Activated CD4-positive, alpha-beta T cell treated with anti-CD3 and anti-CD28 coated beads, Interleukin-2, amount 10 ng/mL, durations not matched to agents 7 days and 5 days (primary cell): ENCODE measurements at regions of chr11 and their contacts with region 1.

Region 1: DNA sequence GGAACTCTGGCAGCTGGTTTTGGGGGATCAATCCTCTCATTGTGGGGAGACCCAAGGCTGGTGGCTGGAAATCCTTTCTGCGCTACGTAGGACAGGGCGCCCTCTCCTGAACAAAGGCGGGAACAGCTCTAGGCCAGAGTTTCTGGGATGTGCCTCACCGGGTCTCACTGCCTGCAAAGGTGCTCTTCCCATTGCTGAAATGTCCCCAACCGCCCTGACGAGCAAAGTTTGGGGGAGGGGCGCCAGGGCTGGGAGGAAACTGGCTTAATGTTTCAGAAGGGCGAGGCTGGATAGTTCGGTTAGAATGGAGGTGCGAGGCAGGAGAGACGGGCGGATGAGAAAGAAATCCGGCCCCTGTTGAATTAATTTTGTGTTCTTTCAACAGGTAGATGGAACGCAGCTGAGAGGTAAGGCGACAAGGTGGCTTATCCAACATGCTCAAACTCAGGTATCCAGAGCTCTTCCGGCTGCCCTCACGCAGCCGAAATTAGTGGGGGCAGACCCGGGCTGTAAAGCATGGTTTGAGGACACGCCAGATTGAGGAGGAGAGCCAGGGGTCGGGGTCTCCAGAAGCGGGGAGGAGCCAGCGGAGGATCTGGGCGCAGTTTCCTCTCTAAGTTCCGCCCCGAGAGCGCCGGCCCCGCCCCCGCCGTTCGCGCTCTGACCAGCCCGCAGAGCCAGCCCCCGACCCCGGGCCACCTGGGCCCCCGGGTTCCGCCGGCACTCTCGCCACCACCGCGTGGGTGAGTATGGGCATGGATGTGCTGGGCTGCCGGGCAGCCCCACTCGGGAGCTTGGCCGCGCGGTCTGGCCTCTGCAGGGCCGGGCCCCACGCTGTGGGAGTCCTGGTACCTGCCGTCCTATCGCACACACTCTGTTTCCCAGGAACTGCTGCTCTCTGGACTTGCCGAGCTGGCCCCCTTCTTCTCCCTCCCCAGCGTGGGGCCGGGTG is at the start of gene PGAP2:
- DNase-seq: peak; percentile 67
- H3K4me3 Mint-ChIP-seq: peak within 1 kb of the TSS; percentile 86
- H3K27ac Mint-ChIP-seq: peak within 1 kb of the TSS; percentile 90
- H3K4me1 Mint-ChIP-seq: peaks cover 26% of the 10 kb centered on the region
- H3K27me3 Mint-ChIP-seq: no peaks in the 10 kb centered on the region
- total RNA-seq, gene PGAP2: 30.0 to 30.9 TPM

Region 2: DNA sequence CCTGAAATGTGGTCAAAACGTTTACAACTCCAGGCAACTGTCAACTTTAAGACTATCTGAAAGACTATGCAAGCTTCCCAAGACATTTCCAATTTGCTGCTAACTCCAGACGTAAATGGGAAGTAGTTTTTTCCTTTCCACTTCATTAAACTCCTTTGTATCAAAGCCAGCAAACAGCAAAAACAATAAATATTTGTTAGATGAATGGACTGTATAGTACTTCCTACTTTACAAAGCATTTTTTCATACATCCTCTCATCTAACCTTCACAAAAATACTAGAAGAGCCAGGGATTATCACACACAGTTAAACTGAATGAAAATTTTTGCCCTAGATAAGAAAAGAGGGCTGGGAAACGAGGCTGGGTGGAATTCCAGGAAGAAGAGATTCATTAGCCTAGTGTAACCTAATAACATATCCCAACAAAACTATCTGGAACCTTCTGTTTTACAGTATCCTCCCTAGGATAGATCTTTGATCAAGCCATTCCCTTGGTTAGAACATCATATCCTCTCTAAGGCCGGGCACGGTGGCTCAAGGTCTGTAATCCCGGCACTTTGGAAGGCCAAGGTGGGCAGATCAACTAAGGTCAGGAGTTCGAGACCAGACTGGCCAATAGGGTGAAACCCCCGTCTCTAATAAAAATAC is 21.3 kb before region 1 on chr11:
- CTCF ChIA-PET with region 1: interaction called, 14 read pairs
- POLR2A ChIA-PET with region 1: no interaction called
- DNase-seq: no peak
- H3K4me3 Mint-ChIP-seq: no peak overlapping the region
- H3K27ac Mint-ChIP-seq: peak overlapping the region; percentile 77
- H3K4me1 Mint-ChIP-seq: peaks cover 72% of the 10 kb centered on the region
- H3K27me3 Mint-ChIP-seq: no peaks in the 10 kb centered on the region

Region 3: GRCh38 chr11:3797329-3798095 is 10.7 kb before region 1 on chr11 and contains the start of gene NUP98:
- CTCF ChIA-PET with region 1: interaction called, 37 read pairs
- POLR2A ChIA-PET with region 1: interaction called, 4 read pairs
- DNase-seq: peak; percentile 100
- H3K4me3 Mint-ChIP-seq: peak within 1 kb of the TSS; percentile 86
- H3K27ac Mint-ChIP-seq: peak within 1 kb of the TSS; percentile 95
- H3K4me1 Mint-ChIP-seq: peaks cover 48% of the 10 kb centered on the region
- H3K27me3 Mint-ChIP-seq: no peaks in the 10 kb centered on the region
- total RNA-seq, gene NUP98: 94.7 to 116 TPM

Region 4: DNA sequence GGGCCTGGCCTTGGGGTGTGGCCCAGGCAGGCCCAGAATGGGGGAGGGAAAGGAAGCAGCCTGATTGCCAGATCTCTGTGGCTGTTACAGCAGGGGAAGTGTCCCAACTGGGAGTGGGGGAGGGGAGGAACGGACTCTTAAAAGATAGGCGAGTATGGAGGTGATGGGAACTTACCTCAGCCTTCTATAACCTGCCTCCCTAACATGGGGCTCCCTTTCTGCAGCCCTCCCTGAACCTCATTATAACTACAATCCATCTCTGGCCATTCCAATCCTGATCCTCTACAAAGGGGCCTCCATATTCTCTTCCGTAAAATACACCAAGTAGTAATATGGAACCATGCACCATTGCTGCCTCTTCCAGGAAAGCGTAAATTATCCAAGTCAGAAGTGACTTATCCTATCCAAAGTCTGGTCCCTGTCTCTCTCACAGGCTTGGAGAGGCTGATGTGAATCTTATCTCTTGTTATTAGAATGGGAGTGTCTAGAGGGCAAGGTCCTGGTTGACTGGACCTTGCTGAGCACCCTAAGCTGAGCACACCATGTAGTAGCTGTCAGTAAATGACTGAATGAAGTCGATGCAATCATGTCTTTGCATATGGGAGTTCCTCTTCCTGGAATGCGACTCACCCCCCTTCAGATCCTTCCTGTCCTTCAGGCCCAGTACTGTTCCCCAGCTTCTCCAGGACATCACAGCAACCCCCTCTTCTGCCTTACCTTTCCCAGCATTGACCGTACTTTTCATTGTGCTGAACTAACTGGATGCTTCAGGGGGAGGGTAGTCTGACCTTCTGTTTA is 26.7 kb after region 1 on chr11:
- CTCF ChIA-PET with region 1: interaction called, 11 read pairs
- POLR2A ChIA-PET with region 1: no interaction called
- DNase-seq: no peak
- H3K4me3 Mint-ChIP-seq: peak overlapping the region; percentile 61
- H3K27ac Mint-ChIP-seq: peak overlapping the region; percentile 78
- H3K4me1 Mint-ChIP-seq: peaks cover 84% of the 10 kb centered on the region
- H3K27me3 Mint-ChIP-seq: no peaks in the 10 kb centered on the region

Region 5: GRCh38 chr11:3841426-3842350 is 33.5 kb after region 1 on chr11:
- CTCF ChIA-PET with region 1: interaction called, 11 read pairs
- POLR2A ChIA-PET with region 1: no interaction called
- DNase-seq: peak; percentile 93
- H3K4me3 Mint-ChIP-seq: peak overlapping the region; percentile 94
- H3K27ac Mint-ChIP-seq: peak overlapping the region; percentile 99
- H3K4me1 Mint-ChIP-seq: peaks cover 52% of the 10 kb centered on the region
- H3K27me3 Mint-ChIP-seq: no peaks in the 10 kb centered on the region